ENCODE measurements at regions of chr11 and their contacts with region 1.

Region 1: DNA sequence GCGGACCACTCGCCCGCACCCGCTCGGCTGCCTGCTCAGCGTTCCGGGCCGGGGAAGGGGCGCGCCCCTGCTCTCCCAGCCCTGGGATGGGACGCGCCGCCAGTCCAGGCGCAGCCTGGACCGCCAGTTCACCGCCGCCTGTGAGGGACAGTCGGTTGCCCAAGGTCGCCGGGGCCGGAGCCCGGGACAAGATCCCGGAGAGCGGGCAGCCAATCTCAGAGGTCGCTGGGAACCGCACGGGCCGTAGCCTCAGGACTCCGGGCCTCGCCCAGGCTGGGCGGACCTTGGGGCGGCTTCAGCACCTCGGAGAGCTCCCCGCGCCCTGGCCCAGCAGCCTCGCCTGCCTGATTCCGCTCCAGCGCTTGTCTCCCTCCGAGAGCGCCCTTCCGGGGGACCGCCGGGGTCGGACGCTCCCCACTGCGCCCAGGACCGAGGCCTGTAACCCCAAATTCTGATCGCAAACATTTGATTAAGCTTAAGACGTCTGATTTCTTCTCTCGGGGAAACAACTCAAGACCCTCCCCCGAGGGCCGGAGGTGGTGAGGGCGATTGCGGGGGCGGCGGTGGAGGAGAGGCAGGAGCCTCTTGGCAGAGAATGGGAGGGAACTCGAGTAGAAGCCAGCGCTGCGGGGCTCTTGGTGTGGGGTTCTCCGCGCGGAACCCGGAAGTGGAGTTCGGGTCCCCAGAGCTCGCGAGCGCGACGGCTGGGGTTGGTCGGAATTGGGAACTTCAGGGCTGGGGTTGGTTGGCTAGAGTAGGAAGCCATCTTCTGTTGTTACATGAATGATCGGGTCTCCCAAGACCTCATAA is 1.1 kb upstream of the CHRM4 start:
- DNase-seq: peak; percentile 81
- ATAC-seq: peak; percentile 85
- H3K4me3 Mint-ChIP-seq: peak overlapping the region; percentile 65
- H3K27ac Mint-ChIP-seq: no peak overlapping the region
- H3K4me1 Mint-ChIP-seq: peaks cover 24% of the 10 kb centered on the region
- H3K27me3 Mint-ChIP-seq: peaks cover 41% of the 10 kb centered on the region
- CTCF ChIP-seq: no peak

Region 2: DNA sequence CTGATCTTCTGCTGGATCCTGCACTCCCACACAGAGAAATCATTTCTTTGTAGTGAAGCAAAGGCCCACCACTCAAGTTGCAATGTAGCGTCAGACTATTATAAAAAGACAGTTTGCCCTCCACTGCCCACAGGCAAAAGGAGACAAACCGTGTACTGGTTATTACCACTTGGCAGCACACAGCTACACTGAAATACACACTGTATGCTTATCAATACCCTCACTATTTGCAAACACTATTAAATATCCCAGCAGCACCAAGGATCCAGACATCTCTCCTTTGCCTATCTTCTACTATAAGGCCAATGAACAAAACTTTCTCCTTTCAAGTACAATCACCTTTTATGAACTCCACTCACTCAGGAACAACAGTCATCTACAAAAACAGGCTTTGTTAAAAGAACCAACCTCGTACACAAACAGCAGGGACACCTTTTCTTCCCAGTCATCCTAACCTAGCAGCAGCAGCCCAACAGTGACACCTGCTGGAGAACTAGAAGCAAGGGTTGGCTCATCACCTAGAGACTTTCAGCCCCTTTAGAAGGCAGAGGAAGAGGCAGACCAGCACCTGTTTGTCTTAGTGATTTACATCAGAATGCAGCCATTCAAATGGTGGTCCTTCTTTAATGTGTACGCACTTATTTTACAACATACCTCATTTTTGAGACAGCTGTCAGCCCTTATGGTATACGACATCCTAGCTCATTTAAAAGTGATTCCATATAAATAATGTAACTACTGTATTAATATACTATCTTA is 145.1 kb after region 1 on chr11:
- CTCF ChIA-PET with region 1: interaction called, 7 read pairs
- POLR2A ChIA-PET with region 1: no interaction called
- intact Hi-C with region 1: loop called (anchors 5 kb)
- DNase-seq: peak; percentile 70
- ATAC-seq: peak; percentile 95
- H3K4me3 Mint-ChIP-seq: no peak overlapping the region
- H3K27ac Mint-ChIP-seq: peak overlapping the region; percentile 8
- H3K4me1 Mint-ChIP-seq: peaks cover 14% of the 10 kb centered on the region
- H3K27me3 Mint-ChIP-seq: no peaks in the 10 kb centered on the region
- CTCF ChIP-seq: peak; percentile 87

Measured in activated CD8-positive, alpha-beta T cell treated with anti-CD3 and anti-CD28 coated beads for 36 hours (primary cell).